Spleen (tissue), 13 donors: ENCODE measurements at regions of chr12 and their contacts with region 1.

Region 1: GRCh38 chr12:128783129-128783574 is 40.6 kb downstream of the SLC15A4 start:
- DNase-seq: no peak
- H3K4me3 ChIP-seq: peak overlapping the region in 1 of 8 donors; percentile 29
- H3K27ac ChIP-seq: peak overlapping the region in 3 of 8 donors; percentile 24 to 55 (median 43)
- H3K4me1 ChIP-seq: peaks cover 0 to 29% (median 9%) of the 10 kb centered on the region in 6 donors
- H3K27me3 ChIP-seq: peaks cover 0 to 6% (median 0%) of the 10 kb centered on the region in 7 donors
- CTCF ChIP-seq: no peak
- POLR2A ChIP-seq: no peak

Region 2: DNA sequence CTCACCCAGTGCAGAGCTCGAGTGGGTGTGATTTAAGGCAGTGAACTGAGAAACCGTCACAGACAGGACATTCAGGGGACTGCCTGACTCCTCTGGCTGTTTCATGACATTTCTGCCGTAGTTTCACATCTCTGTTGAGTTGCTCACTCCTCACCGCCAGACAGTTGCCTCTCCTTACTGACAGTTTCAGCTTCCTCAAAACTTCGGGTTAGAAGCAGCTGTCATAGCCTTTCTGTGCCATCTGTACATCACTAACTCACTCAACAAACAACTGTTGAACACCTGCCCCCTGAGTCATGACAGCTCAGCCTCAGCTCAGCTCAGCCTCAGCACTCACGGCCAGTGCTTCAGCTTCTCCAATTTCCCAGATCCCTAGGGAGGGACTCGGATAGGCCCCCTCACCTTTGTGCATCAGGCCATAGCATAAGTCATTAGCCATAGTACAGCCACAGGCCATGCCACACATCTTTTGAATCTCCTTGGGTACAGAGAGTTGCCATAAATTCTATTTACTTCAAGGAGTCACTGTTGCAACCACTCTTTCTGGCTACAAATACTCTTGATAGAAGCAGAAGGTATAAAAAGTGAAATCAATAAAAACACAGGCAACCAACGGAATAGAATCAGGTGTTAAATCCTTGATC is 46.8 kb after region 1 on chr12:
- intact Hi-C with region 1: loop called (anchors 10 kb)
- DNase-seq: peak; percentile 81
- H3K4me3 ChIP-seq: peak overlapping the region in 1 of 8 donors; percentile 44
- H3K27ac ChIP-seq: peak overlapping the region; percentile 30 to 93 (median 84)
- H3K4me1 ChIP-seq: peaks cover 3 to 41% (median 25%) of the 10 kb centered on the region in 6 donors
- H3K27me3 ChIP-seq: peaks cover 0 to 7% (median 0%) of the 10 kb centered on the region in 7 donors
- CTCF ChIP-seq: no peak
- POLR2A ChIP-seq: no peak